BJ (cell line): ENCODE measurements at regions of chr2 and their contacts with region 1.

Region 1: GRCh38 chr2:199842631-199843395 is 8.2 kb downstream of the FTCDNL1 start:
- DNase-seq: no peak
- H3K4me3 ChIP-seq: no peak overlapping the region
- H3K27me3 ChIP-seq: no peaks in the 10 kb centered on the region
- CTCF ChIP-seq: no peak

Region 2: GRCh38 chr2:198394208-198394607 is 1448.6 kb before region 1 on chr2:
- CTCF ChIA-PET with region 1: no interaction called
- POLR2A ChIA-PET with region 1: interaction called, 12 read pairs
- DNase-seq: no peak
- H3K4me3 ChIP-seq: no peak overlapping the region
- H3K27me3 ChIP-seq: no peaks in the 10 kb centered on the region
- CTCF ChIP-seq: no peak

Region 3: DNA sequence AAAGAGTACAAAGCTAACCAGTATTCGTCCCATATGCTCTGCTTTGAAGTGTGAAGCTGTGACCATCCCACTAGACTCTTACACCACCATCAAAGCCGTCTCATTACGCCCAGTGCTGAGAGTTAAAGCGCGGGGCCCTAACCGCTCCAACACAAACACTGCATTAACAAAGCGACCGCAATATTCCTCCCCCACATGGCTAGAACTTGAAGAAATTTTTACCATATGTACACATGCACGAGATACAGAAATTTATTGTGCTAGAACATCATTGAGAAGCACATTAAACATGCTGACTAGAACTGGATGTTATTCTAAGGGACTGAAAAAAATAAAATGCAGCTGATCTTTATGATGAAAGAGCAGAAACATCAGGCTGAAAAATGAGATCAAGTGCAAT is 12.3 kb before region 1 on chr2:
- CTCF ChIA-PET with region 1: no interaction called
- POLR2A ChIA-PET with region 1: no interaction called
- DNase-seq: no peak
- H3K4me3 ChIP-seq: no peak overlapping the region
- H3K27me3 ChIP-seq: no peaks in the 10 kb centered on the region
- CTCF ChIP-seq: no peak